Cardiac septum (tissue), 1 donor: ENCODE measurements at regions of chr3 and their contacts with region 1.

Region 1: GRCh38 chr3:38834717-38835116 is 18.7 kb upstream of the SCN10A start:
- DNase-seq: no peak

Region 2: DNA sequence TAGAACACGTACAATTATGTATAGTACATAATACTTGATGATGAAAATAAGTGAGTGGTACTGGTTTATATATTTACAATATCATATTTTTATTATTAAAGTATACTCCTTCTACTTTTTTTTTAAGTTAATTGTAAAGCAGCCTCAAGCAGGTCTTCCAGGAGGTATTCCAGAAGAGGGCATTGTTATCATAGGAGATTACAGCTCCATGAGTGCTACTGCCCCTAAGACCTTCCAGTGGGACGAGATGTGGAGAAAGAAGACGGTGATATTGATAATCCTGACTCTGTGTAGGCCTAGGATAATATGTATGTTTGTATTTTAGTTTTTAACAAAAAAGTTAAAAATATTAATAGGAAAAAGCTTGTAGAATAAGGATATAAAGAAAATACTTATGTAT is 144.9 kb before region 1 on chr3:
- intact Hi-C with region 1: loop called (anchors 5 kb)
- DNase-seq: no peak

Region 3: DNA sequence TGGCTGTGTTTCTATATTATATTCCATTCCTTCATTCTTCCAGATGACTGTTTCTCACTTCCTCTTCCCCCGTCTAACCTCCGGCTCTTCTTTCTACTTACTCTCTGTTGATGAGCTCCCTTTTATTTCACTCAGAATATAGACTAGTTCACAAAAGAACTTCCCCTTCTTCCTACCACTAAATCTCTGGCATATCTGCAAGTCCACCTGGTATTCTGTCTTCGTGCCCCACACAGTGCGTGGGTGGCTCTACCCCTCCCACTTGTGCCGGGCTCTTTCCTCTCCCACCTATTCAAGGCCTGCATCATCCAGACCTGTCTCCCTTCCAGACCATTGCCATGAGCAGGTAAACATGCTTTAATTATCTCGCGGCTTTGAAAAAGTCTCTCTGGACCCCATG is 91.7 kb before region 1 on chr3:
- intact Hi-C with region 1: loop called (anchors 5 kb)
- DNase-seq: no peak

Region 4: GRCh38 chr3:38782148-38782547 is 52.6 kb before region 1 on chr3:
- intact Hi-C with region 1: no loop called
- DNase-seq: no peak